ENCODE measurements at regions of chr1 and their contacts with region 1.

Region 1: DNA sequence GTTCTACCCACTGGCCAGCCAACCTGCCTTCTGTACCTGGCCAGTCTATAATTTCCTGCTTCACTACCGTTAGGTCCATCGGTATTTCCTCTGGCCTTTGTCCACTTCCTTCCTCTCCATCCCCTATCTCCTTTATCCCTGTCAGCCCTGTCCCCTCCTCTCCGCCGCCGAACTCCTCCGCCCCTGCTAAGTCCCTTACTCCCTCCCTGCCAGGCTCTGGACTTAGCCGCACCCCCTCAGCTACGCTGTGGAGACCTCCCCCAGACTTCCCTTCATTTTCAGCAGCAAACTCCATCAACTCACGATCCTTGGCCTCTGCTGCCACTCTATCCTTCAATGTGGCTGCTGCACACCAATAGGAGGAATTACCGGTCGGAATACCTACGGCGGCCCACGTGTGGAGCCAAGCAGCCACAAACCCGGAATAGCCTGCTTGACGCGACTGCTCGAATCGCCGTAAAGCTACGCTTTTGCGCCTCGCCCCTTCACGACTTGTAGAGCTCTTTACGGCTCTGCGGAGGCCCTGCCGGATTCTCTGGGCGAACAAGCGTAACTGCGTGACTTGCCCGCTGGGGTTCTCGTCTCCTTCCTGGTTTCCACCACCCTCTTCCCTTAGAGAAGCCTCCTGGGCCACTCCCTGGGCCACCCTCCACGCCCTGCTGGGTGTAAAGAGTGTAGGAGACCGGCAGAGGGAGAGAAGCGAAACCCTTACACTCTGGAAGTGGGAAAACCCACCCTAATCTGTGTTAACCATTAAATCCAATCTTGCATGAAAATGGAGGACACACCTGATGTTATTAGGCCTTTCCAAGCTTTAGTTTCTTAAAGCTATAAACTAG is at the start of gene ZNHIT6:
- DNase-seq: peak; percentile 92
- H3K4me3 Mint-ChIP-seq: no peak within 1 kb of the TSS
- H3K27ac Mint-ChIP-seq: no peak within 1 kb of the TSS
- H3K4me1 Mint-ChIP-seq: peaks cover 26% of the 10 kb centered on the region
- H3K27me3 Mint-ChIP-seq: no peaks in the 10 kb centered on the region
- CTCF ChIP-seq: no peak
- total RNA-seq, gene ZNHIT6: 41.2 and 43.5 TPM in 2 replicates

Region 2: GRCh38 chr1:85417017-85417416 is 291.2 kb before region 1 on chr1:
- CTCF ChIA-PET with region 1: no interaction called
- intact Hi-C with region 1: no loop called
- DNase-seq: no peak
- H3K4me3 Mint-ChIP-seq: no peak overlapping the region
- H3K27ac Mint-ChIP-seq: no peak overlapping the region
- H3K4me1 Mint-ChIP-seq: peaks cover 20% of the 10 kb centered on the region
- H3K27me3 Mint-ChIP-seq: no peaks in the 10 kb centered on the region
- CTCF ChIP-seq: no peak

Region 3: GRCh38 chr1:85607126-85607912 is 100.9 kb before region 1 on chr1:
- CTCF ChIA-PET with region 1: interaction called, 6 read pairs
- intact Hi-C with region 1: loop called (anchors 5 kb)
- DNase-seq: peak; percentile 89
- H3K4me3 Mint-ChIP-seq: peak overlapping the region; percentile 40
- H3K27ac Mint-ChIP-seq: peak overlapping the region; percentile 88
- H3K4me1 Mint-ChIP-seq: peaks cover 88% of the 10 kb centered on the region
- H3K27me3 Mint-ChIP-seq: no peaks in the 10 kb centered on the region
- CTCF ChIP-seq: no peak

Region 4: DNA sequence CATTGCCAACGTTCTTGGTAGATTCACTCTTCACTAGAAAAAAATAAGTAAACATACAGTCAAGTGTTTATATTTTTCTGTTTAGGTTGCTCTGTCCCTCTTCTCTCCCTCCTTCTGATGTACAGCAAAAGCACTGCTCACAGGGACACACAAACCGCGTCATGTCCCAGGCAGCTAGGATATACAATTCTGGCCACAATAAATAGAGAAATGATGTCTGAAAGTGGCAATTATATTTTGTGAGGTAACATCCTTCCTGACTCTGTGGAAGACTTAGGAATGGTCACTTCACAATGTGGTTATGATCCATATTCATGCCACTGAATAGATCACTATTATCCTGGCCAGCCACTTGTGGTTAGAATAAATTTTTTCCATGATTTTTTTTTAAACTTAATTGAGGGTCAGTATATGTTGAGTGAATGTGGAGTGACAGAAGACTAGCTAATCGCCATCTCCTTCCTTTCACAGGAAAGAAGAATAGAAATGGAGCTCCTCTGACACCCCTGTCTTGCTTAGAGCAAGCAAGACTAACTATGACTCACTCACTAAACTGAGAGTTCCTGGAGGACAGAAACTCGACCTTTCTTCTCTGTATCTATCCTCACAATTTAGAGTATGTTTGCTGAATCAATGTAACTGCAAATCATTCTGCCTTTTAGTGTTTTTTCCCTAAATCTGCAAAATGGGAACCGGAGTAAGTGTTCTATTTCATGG is 54.0 kb before region 1 on chr1:
- CTCF ChIA-PET with region 1: no interaction called
- intact Hi-C with region 1: no loop called
- DNase-seq: no peak
- H3K4me3 Mint-ChIP-seq: no peak overlapping the region
- H3K27ac Mint-ChIP-seq: no peak overlapping the region
- H3K4me1 Mint-ChIP-seq: peaks cover 27% of the 10 kb centered on the region
- H3K27me3 Mint-ChIP-seq: no peaks in the 10 kb centered on the region
- CTCF ChIP-seq: no peak

Region 5: DNA sequence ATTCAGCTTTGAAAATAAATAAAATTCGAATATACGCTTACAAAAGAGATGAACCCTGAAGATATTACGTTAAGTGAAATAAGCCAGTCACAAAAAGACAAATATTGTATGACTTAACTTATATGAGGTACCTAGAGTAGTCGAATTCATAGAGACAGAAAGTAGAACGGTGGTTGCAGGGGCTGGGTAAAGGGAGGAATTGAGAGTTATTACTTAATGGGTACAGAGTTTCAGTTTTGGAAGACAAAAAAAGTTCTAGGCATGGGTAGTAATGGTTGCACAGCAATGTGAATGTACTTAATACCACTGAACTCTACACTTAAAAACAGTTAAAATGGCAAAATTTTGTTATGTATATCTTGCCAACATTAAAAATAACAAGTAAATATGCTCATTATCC is 48.7 kb after region 1 on chr1:
- CTCF ChIA-PET with region 1: no interaction called
- intact Hi-C with region 1: no loop called
- DNase-seq: no peak
- H3K4me3 Mint-ChIP-seq: no peak overlapping the region
- H3K27ac Mint-ChIP-seq: no peak overlapping the region
- H3K4me1 Mint-ChIP-seq: no peaks in the 10 kb centered on the region
- H3K27me3 Mint-ChIP-seq: no peaks in the 10 kb centered on the region
- CTCF ChIP-seq: no peak

Region 6: DNA sequence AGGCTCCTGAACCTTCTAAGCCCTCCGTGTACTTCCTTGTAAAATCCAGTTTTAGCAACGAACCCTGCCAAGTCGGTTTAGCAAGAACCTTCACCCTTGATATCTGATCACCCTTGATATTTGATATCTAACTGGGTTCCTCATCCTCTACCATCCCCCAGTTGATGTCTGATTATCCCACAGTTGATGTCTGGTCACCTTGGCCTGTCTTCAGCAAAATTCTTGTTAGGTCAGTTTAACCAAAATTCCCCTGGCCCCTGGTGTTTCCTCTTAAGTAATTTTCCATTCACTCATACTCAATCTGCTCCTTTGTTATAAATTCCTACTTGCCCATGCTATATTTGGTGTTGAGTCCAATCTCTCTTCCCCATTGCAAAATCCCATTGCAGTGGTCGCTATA is 114.5 kb after region 1 on chr1:
- CTCF ChIA-PET with region 1: no interaction called
- intact Hi-C with region 1: loop called (anchors 1 kb)
- DNase-seq: peak; percentile 45
- H3K4me3 Mint-ChIP-seq: peak overlapping the region; percentile 40
- H3K27ac Mint-ChIP-seq: peak overlapping the region; percentile 90
- H3K4me1 Mint-ChIP-seq: peaks cover 46% of the 10 kb centered on the region
- H3K27me3 Mint-ChIP-seq: no peaks in the 10 kb centered on the region
- CTCF ChIP-seq: no peak

Region 7: DNA sequence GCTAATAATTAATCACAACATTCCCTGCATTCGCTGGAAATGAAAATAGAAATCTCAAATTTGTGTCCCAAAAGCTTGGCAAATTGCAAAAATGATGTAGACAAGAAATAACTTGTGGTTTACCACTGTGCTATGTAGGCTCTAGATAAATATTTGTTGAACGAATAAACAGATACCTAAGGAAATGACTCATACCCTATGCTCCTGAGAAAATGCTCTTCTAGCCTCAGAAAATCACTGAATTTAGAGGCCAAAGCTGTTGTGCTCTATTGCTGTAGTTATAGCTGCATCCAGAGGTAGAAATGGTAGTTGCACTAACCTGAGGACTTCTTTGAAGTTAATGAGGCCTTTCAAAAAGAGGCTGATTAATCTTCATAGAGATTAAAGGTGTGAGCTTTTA is 142.0 kb after region 1 on chr1:
- CTCF ChIA-PET with region 1: interaction called, 27 read pairs
- intact Hi-C with region 1: loop called (anchors 1 kb)
- DNase-seq: peak; percentile 15
- H3K4me3 Mint-ChIP-seq: no peak overlapping the region
- H3K27ac Mint-ChIP-seq: peak overlapping the region; percentile 71
- H3K4me1 Mint-ChIP-seq: peaks cover 29% of the 10 kb centered on the region
- H3K27me3 Mint-ChIP-seq: no peaks in the 10 kb centered on the region
- CTCF ChIP-seq: no peak

Region 8: GRCh38 chr1:85884372-85885035 is 176.3 kb after region 1 on chr1:
- CTCF ChIA-PET with region 1: interaction called, 5 read pairs
- intact Hi-C with region 1: loop called (anchors 1 kb)
- DNase-seq: no peak
- H3K4me3 Mint-ChIP-seq: no peak overlapping the region
- H3K27ac Mint-ChIP-seq: no peak overlapping the region
- H3K4me1 Mint-ChIP-seq: peaks cover 10% of the 10 kb centered on the region
- H3K27me3 Mint-ChIP-seq: no peaks in the 10 kb centered on the region
- CTCF ChIP-seq: peak; percentile 63

Region 9: DNA sequence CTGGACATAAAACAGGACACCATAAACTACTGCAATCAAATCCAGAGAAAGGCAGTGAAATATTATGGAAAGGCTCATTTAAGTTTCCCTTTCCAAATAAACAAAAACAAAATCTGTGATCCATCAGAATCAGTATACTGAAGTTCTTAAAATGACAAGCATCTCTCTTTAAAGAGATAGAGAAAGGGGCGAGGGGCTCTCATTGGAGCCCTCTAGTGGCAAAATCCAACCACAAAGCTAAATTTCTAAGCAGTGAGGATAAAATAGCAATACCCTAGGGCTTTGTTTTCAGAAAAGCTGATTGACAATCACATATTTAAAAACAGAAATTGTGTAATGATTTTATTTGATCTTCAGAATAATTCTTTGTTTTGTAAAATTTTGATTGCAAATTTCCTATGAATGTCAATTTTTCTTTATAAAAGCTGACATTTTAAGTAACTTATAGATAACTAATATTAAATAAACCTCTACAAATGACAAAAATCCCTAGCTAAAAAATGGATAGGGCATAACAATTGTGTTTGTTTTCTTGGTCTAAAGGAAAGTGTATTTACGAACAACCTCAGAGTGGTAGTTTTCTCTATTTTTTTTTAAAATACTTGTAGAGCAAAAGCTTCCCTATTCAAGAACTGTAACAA is 310.2 kb after region 1 on chr1:
- CTCF ChIA-PET with region 1: interaction called, 3 read pairs
- intact Hi-C with region 1: loop called (anchors 2 kb)
- DNase-seq: peak; percentile 35
- H3K4me3 Mint-ChIP-seq: no peak overlapping the region
- H3K27ac Mint-ChIP-seq: no peak overlapping the region
- H3K4me1 Mint-ChIP-seq: no peaks in the 10 kb centered on the region
- H3K27me3 Mint-ChIP-seq: no peaks in the 10 kb centered on the region
- CTCF ChIP-seq: peak; percentile 64

Measured in Calu3 (cell line).